Breast epithelium (tissue), 4 donors: ENCODE measurements at regions of chr1 and their contacts with region 1.

Region 1: GRCh38 chr1:207828485-207829158 is 76.8 kb downstream of the CD46 start:
- DNase-seq: peak; percentile 58 to 78
- H3K4me3 ChIP-seq: no peak overlapping the region
- H3K27ac ChIP-seq: peak overlapping the region; percentile 62 to 98
- H3K4me1 ChIP-seq: peaks cover 17 to 38% of the 10 kb centered on the region in 2 donors
- H3K27me3 ChIP-seq: no peaks in the 10 kb centered on the region
- CTCF ChIP-seq: peak; percentile 70 to 95 (median 94)
- POLR2A ChIP-seq: no peak

Region 2: GRCh38 chr1:207868774-207869721 is 40.4 kb after region 1 on chr1:
- intact Hi-C with region 1: loop called (anchors 5 kb)
- DNase-seq: peak; percentile 51 to 73
- H3K4me3 ChIP-seq: peak overlapping the region; percentile 57 to 91 (median 83)
- H3K27ac ChIP-seq: peak overlapping the region; percentile 96 to 98
- H3K4me1 ChIP-seq: peaks cover 11 to 27% of the 10 kb centered on the region in 2 donors
- H3K27me3 ChIP-seq: no peaks in the 10 kb centered on the region
- CTCF ChIP-seq: peak; percentile 54 to 97 (median 58)
- POLR2A ChIP-seq: no peak